ENCODE measurements at regions of chr1 and their contacts with region 1.

Region 1: GRCh38 chr1:154775621-154776605 is 94.2 kb downstream of the KCNN3 start:
- DNase-seq: no peak
- H3K4me3 ChIP-seq: no peak overlapping the region
- CTCF ChIP-seq: no peak

Region 2: GRCh38 chr1:154669464-154670282 is 106.2 kb before region 1 on chr1:
- in situ Hi-C with region 1: no loop called
- DNase-seq: peak; percentile 54
- H3K4me3 ChIP-seq: no peak overlapping the region
- CTCF ChIP-seq: peak; percentile 84

Region 3: DNA sequence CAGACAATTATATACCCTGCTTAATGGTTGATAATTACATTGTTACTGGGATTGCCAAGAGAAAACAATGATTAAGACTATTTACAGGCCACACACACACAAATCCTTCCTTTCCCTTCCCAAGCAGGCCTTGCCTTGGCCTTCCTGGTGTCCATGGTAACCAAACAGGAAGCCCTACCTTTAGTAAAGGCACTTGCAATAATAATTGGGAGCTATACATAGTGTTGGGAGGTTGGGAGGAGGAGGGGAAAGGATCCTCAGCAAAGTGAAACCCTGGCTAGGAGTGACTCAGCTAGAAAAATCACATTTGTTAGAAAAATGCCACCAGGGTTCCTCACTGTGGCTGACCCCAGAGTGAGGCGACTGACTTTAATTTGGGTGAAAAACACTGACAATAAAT is 45.7 kb before region 1 on chr1:
- in situ Hi-C with region 1: loop called (anchors 5 kb)
- DNase-seq: no peak
- H3K4me3 ChIP-seq: no peak overlapping the region
- CTCF ChIP-seq: no peak

Region 4: DNA sequence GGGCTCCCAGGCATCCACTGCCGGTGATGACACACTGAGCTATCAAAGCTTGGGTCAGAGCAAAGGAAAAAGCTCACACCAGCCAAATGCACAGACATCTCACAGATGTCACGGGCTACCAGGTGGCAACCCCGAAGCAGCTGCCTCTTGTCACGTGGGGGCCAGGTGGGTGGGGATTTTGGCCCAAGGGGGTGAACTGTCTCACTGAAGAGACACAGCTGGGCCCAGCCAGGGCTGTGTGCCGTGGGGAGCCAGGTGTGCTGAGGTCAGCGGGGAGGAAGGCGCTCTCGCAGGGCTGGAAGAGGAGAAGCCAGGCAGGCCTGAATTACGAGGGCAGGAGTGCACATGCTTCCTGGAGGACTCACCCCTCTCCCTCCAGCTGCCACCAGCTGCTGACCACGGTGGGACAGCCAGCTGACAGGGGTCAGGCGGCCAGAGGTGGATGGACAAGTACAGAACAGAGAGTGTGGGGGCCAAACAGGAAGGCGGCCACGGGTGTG is 61.8 kb after region 1 on chr1:
- in situ Hi-C with region 1: loop called (anchors 5 kb)
- DNase-seq: no peak
- H3K4me3 ChIP-seq: no peak overlapping the region
- CTCF ChIP-seq: no peak

Region 5: DNA sequence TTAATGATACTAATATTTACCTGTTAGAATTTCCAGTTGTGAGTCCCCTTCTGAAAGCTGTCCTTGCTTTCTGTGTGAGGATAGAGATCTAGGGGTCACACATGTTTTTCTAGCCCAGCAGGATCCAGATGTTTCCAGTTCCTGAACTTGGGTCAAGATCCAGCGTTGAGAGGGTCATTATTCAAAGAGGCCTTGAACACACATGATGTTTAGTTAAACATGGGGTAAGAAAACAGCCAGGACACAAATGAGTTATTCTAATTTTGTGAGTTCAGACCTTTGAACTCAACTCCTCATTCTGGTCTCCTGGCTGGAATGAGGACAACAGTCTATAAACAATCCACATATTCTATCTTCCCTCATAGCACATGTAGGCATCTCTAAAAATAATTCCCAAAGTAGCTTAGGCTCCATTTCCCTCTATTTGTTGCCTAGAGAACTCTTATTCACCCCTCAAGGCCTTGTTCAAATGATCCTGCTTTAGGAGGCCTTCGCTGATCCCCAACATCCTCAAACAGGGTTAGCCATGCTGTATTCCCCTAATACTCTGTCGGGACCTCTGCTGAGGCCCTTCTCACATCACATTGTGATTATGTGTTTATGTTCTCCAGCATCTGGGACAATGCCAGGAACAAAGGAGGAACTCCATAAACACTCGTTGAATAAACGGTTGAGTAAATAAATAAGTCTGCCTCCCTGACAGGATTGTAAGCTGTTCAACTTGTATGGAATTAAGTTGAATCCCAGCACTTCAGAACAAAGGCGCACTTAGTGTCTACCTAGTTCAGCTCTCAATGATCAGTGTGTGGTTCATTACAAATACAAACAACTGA is 109.2 kb after region 1 on chr1:
- in situ Hi-C with region 1: loop called (anchors 5 kb)
- DNase-seq: no peak
- H3K4me3 ChIP-seq: no peak overlapping the region
- CTCF ChIP-seq: no peak

Region 6: GRCh38 chr1:155185351-155186066 is 409.6 kb after region 1 on chr1:
- in situ Hi-C with region 1: no loop called
- DNase-seq: no peak
- H3K4me3 ChIP-seq: no peak overlapping the region
- CTCF ChIP-seq: no peak

Measured in astrocyte of the cerebellum (primary cell).